PC-3 (cell line): ENCODE measurements at regions of chrX and their contacts with region 1.

Region 1: GRCh38 chrX:134622056-134622812 is 36.0 kb downstream of the PLAC1 start:
- DNase-seq: peak; percentile 86
- ATAC-seq: peak; percentile 90
- H3K4me3 ChIP-seq: peak overlapping the region; percentile 11; the same call in 1 of the 2 replicates
- H3K27ac ChIP-seq: peak overlapping the region; percentile 57
- H3K4me1 ChIP-seq: peaks cover 56% of the 10 kb centered on the region
- H3K27me3 ChIP-seq: no peaks in the 10 kb centered on the region
- CTCF ChIP-seq: no peak

Region 2: DNA sequence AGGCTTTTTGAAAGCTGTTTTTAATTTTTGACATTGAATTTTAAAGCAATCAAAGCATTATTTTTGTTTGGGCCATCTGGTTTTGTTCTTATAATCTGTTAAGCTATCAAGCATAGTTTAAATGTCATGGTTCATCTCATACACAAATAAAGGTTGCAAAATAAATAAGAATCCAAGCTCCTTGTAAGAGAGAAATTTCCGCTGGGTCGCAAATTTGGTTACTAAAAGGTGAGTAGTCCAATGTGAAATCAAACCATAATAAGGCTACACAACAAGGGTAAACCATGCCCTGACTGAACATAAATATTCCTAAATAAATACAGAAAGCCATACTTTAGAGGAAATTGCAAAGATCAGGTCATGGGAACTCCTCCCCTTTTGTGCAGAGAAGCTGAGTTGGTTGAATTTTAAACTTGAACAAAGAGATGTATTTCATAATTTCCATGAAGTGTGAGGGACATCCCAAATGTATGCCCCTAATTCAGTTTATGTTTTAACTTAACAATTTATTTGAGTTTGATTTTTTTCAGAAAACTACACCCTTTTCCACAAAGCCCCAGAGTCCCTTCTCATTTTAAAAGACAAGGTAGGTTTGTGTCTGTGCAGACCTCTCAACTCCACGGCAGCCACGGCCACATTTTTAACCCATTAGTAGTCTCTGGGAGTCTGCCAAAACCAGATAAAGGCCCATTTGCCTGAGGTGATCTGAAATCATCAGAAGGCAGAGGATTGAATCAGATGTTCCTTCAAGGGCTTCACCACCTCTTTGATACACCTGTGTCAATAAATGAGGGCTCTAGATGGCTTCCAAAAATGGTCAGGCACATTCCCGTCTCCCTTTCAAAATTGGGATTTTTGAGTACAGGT is 49.2 kb before region 1 on chrX:
- CTCF ChIA-PET with region 1: no interaction called
- POLR2A ChIA-PET with region 1: no interaction called
- intact Hi-C with region 1: no loop called
- DNase-seq: peak; percentile 92
- ATAC-seq: peak; percentile 51
- H3K4me3 ChIP-seq: peak overlapping the region; percentile 33; the same call in 1 of the 2 replicates
- H3K27ac ChIP-seq: peak overlapping the region; percentile 67
- H3K4me1 ChIP-seq: peaks cover 69% of the 10 kb centered on the region
- H3K27me3 ChIP-seq: no peaks in the 10 kb centered on the region
- CTCF ChIP-seq: no peak

Region 3: DNA sequence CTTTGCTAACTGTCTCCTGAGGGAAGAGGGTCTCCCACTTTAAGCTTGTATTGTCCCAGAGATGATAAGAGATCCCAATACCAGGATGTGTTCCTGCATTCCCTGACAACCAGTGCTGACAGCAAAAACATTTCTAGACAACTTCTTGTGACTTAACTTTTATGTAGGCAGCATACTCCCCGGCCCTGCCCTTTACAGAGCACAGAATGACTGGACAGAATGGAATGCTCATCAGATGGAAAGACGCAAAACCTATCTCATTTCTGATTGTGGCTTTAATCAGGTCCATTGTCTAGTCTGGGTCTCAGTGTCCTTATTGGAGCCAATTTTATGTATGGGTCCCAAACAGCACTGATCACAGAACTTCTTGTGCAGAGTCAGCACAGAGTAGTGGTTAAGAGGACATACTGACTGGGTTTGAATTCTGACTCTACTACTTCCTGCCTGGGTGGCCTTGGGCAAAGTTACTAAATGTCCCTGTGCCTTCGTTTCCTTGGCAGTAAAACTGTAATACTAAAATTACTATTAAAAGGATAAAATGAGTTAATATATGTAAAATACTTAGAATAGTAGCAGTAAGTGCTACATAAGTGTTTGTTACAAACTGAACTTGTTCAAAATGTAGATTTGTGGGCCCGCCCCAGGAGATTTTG is 54.3 kb after region 1 on chrX:
- CTCF ChIA-PET with region 1: no interaction called
- POLR2A ChIA-PET with region 1: no interaction called
- intact Hi-C with region 1: loop called (anchors 5 kb)
- DNase-seq: peak; percentile 78
- ATAC-seq: peak; percentile 96
- H3K4me3 ChIP-seq: no peak overlapping the region
- H3K27ac ChIP-seq: peak overlapping the region; percentile 42
- H3K4me1 ChIP-seq: peaks cover 19% of the 10 kb centered on the region
- H3K27me3 ChIP-seq: no peaks in the 10 kb centered on the region
- CTCF ChIP-seq: no peak

Region 4: GRCh38 chrX:134718105-134718965 is 96.1 kb after region 1 on chrX:
- CTCF ChIA-PET with region 1: no interaction called
- POLR2A ChIA-PET with region 1: no interaction called
- intact Hi-C with region 1: loop called (anchors 5 kb)
- DNase-seq: peak; percentile 96
- ATAC-seq: peak; percentile 96
- H3K4me3 ChIP-seq: no peak overlapping the region
- H3K27ac ChIP-seq: peak overlapping the region; percentile 78
- H3K4me1 ChIP-seq: peaks cover 17% of the 10 kb centered on the region
- H3K27me3 ChIP-seq: no peaks in the 10 kb centered on the region
- CTCF ChIP-seq: peak; percentile 36; the same call in 1 of the 2 replicates